Activated T-helper 2 cell treated with anti-CD3 and anti-CD28 coated beads, Interferon-gamma antibody, Interleukin-2, Interleukin-4, amounts not matched to agents 10 μg/mL and 5 μg/mL and 100 μg/mL, durations not matched to agents 14 hours and 24 hours and 36 hours (primary cell): ENCODE measurements at regions of chr4 and their contacts with region 1.

Region 1: GRCh38 chr4:118012142-118012541 is 22.1 kb upstream of the NDST3 start:
- DNase-seq: no peak
- H3K4me3 Mint-ChIP-seq: no peak overlapping the region
- H3K27ac Mint-ChIP-seq: no peak overlapping the region
- H3K4me1 Mint-ChIP-seq: no peaks in the 10 kb centered on the region
- H3K27me3 Mint-ChIP-seq: no peaks in the 10 kb centered on the region

Region 2: GRCh38 chr4:117740736-117741135 is 271.4 kb before region 1 on chr4:
- intact Hi-C with region 1: loop called (anchors 10 kb)
- DNase-seq: no peak
- H3K4me3 Mint-ChIP-seq: no peak overlapping the region
- H3K27ac Mint-ChIP-seq: no peak overlapping the region
- H3K4me1 Mint-ChIP-seq: no peaks in the 10 kb centered on the region
- H3K27me3 Mint-ChIP-seq: no peaks in the 10 kb centered on the region